ENCODE measurements at regions of chr11 and their contacts with region 1.

Region 1: DNA sequence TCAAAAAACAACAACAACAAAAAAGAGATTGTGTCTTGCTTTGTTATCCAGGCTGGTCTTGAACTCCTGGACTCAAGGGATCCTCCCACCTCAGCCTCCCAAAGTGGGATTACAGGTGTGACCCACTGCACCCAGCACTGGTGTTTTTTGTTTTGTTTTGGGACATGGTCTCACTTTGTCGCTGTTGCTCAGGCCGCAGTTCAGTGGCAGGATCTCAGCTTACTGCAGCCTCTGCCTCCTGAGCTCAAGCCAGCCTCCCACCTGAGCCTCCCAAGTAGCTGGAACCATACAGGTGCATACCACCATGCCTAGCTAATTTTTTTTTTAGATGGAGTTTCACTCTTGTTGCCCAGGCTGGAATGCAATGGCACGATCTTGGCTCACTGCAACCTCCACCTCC is 12.6 kb upstream of the SCYL1 start:
- DNase-seq: no peak
- ATAC-seq: no peak

Region 2: DNA sequence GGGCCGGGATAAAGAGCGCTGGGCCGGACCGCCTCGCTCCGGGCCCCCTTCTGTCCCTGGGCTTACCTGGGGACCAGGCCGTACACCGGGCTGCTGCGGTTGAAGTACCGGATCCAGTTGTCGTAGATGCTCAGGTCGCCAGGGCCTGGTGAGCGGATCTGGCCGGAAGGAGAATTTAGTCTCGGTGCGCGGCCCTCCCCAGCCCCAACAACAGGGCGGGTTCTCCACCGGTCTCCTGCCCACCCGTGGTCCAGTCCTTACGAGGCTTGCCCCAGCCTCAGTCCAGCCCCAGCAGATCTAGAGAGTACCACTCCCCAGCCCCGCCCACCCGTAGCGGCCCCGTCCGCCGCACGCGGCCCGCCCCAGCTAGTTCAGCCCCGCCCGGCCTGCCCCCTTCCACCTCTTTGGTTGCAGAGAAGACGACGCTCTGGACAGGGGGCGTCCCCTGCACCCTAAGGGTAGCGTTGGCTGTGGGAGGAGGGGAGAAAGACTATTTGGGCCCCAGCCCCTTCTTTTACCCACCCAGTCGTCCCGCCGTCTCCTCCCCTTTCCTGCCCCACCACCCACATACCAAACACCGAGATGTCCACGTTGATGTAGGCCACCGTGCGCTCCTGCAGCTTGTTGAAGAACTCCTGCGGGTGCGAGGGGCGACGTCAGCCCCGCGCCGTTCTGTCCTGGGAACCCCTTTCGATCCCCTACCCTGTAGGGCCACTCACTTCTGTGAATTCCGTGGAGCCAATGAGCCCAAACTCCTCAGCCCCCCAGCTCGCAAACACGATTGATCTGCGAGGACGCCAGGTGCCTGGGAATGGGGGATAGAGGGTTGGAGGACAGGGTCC is 464.5 kb before region 1 on chr11:
- intact Hi-C with region 1: no loop called
- DNase-seq: peak; percentile 63
- ATAC-seq: peak; percentile 57

Region 3: DNA sequence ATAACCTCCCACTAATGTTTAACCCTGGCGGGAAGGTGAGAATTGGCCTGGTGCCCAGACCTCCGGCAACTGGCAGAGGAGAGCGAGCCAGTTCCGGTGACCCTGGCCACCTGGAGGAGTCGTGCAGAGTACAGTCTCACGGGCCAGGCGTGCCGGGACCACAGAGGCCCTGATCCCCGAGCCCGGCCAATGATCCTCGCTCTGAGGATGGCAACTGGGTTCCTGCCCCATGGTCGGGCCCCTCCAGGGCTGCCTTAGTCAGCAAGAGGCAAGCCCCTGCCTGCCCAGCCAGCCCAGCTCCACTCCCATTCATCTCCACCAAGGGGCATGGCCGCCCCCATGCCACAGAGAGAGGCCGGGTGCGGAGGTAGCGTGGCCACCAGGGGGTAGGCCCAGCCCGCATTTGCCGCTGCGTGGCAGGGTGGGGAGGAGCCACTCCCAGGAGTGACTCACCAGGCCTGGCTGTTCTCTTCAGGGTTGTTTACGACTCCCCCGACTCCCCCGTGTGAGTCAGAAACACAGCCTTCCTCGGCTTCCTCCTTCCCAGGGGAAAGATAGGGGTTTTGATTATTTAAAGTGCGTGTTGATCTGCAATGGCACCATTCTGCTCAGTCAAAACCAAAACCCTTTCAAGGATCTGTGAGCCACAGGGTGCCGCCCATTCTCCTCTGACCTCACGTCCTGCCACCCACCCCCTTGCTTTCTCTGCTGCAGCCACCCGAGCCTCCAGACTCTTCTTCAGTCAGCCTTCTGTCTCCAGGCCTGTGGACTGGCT is 130.1 kb before region 1 on chr11 and contains the start of gene SLC25A45:
- intact Hi-C with region 1: loop called (anchors 5 kb)
- DNase-seq: peak; percentile 93
- ATAC-seq: peak; percentile 92
- total RNA-seq, gene SLC25A45: 5.3 TPM

Region 4: GRCh38 chr11:65481301-65481891 is 30.9 kb before region 1 on chr11:
- intact Hi-C with region 1: no loop called
- DNase-seq: no peak
- ATAC-seq: no peak